Activated CD4-positive, alpha-beta T cell treated with anti-CD3 and anti-CD28 coated beads, Interleukin-2, amount 10 ng/mL, durations not matched to agents 7 days and 5 days (primary cell): ENCODE measurements at regions of chrX and their contacts with region 1.

Region 1: GRCh38 chrX:52923781-52924241 is 26.7 kb downstream of the FAM156B start:
- DNase-seq: no peak
- H3K4me3 Mint-ChIP-seq: no peak overlapping the region
- H3K27ac Mint-ChIP-seq: no peak overlapping the region
- H3K4me1 Mint-ChIP-seq: peaks cover 18% of the 10 kb centered on the region
- H3K27me3 Mint-ChIP-seq: peaks cover 5% of the 10 kb centered on the region

Region 2: DNA sequence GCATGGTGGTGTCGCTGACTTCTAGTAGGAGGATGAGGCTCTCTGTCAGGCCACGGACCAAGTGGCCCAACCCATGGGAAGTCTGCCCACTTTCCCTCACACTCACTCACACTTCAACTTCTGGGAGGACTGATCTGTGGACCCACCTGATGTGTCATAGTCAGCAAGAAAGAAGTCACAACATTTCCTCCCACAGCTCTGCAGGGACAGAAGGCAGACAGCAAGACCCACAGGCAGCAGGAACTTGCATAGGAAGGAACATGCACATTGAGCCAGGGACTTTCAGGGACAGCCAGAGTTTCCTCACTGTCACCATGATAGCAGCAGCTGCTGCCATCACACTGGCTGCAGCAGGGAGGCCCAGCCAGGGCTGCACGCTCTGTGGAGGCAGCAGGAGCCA is 93.3 kb before region 1 on chrX:
- CTCF ChIA-PET with region 1: no interaction called
- POLR2A ChIA-PET with region 1: no interaction called
- DNase-seq: no peak
- H3K4me3 Mint-ChIP-seq: no peak overlapping the region
- H3K27ac Mint-ChIP-seq: no peak overlapping the region
- H3K4me1 Mint-ChIP-seq: no peaks in the 10 kb centered on the region
- H3K27me3 Mint-ChIP-seq: no peaks in the 10 kb centered on the region

Region 3: DNA sequence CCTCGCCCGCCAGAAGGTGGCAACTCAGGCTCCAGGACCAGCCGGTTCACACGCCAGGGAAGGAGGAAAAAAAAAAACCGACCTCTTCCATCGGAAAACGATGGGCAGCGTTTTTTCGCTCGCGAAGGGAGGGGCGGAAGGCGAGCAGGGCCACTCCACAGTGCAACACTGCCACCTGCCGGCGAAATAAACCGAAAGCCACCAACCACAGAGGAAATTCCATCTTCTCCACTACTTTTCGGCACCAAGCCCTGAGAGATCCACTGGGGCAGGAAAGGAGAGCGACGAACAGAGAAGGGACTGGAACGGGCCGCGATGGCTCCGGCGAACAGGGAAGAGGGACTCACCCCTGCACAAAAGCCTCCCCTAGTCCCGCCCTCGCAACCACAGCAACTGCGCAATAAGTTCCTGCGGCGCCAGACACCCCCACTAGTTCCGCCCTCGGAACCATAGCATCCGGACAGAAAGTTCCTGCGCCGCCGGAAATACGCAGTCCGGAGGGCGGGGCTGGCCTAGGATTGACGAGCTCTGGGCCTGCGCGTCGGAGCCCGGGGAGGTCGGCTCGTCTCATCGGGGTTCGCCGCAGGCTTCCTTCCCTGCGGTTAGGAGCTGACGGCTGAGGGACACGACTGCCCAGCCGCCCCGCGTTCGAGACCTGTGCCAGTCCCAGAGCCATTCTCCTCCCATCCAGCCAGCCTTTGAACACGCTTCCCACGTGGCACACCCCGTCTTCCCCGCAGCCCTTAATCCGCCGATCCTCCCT is 11.1 kb after region 1 on chrX:
- CTCF ChIA-PET with region 1: interaction called, 16 read pairs
- POLR2A ChIA-PET with region 1: no interaction called
- DNase-seq: peak; percentile 91
- H3K4me3 Mint-ChIP-seq: peak overlapping the region; percentile 83
- H3K27ac Mint-ChIP-seq: peak overlapping the region; percentile 96
- H3K4me1 Mint-ChIP-seq: peaks cover 11% of the 10 kb centered on the region
- H3K27me3 Mint-ChIP-seq: no peaks in the 10 kb centered on the region